Left cardiac atrium (tissue), 4 donors: ENCODE measurements at regions of chr1 and their contacts with region 1.

Region 1: GRCh38 chr1:181142096-181142958 is 53.8 kb downstream of the IER5 start:
- DNase-seq: peak; percentile 87
- ATAC-seq: peak; percentile 95 to 99

Region 2: GRCh38 chr1:180527101-180527669 is 615.1 kb before region 1 on chr1:
- intact Hi-C with region 1: loop called in 1 of 2 experiments (anchors 10 kb)
- DNase-seq: no peak
- ATAC-seq: peak in 1 of 2 donors; percentile 40

Region 3: DNA sequence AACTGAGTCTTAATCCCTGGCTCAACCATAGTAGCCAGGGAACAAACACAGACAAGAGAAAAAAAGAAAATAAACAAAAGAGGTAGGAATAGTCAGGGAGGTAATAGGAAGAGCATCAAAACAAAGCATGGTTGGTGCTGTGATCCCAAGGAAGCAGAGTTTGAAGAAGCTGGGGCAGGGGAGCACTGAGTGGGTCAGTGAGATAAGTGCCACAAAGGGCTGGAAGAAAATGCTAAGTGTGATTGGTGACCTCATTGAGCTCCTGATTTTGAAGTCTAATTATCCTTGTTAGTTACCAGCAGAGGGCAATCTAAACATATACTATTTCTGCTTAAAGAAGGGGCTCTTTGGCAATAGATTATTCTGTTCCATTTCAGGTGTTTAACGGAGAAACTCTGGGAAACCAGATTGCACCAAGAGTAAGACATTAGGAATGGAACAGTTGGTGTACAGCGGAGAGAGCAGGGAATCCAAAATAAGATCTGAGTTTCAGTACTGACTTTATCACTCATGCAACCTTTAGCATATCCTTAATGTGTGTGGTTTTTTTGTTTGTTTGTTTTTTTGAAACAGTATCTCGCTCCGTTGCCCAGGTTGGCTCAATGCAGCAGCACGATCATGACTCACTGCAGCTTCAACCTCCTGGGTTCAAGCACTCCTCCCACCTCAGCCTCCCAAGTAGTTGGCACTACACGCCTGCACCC is 260.4 kb before region 1 on chr1:
- intact Hi-C with region 1: loop called in 1 of 2 experiments (anchors 5 kb)
- DNase-seq: no peak
- ATAC-seq: peak; percentile 72 to 82

Region 4: DNA sequence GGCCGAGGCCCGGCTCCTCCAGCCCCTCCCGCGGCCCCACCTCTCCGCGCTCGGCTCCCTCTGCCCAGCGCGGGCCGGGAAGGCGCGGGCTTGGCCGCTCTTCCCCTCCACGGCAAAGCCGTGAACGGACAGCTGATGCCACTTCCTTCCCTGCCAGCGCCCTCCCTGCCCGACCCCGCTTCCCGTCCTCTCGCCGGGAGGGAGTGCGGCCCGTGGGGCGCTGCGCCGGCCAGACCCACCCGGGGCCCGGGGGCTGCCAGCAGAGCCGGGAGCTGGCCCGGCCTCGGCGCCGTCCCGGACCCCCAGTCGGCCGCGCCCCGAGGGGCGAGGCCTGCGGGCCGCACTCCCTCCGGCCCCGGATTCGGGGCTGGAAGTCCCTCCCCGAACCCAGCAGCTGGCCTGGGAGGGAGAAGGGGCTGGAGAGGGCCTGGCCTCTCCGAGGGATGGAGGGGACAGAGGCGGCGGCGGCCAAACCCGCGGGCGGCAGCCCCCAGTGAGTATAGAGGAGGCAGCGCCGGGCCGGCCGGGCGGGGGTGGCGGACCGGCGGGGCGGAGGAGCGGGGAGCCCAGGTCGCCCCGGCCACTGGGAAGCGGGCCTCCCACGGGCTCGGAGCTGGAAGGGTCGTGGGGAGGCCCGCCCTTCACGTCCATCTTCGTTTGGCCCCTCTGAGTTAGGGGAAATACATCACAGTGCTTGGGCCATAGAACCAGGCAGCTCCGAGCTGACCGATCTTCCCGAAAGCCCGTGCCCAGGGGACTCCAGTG is 229.3 kb before region 1 on chr1 and contains the start of gene KIAA1614:
- intact Hi-C with region 1: no loop called
- DNase-seq: peak; percentile 59
- ATAC-seq: peak; percentile 88 to 90
- total RNA-seq, gene KIAA1614: 8.2 to 9.3 TPM

Region 5: GRCh38 chr1:181021811-181022434 is 120.4 kb before region 1 on chr1:
- intact Hi-C with region 1: loop called in 1 of 2 experiments (anchors 5 kb)
- DNase-seq: peak; percentile 73
- ATAC-seq: peak; percentile 62 to 79

Region 6: DNA sequence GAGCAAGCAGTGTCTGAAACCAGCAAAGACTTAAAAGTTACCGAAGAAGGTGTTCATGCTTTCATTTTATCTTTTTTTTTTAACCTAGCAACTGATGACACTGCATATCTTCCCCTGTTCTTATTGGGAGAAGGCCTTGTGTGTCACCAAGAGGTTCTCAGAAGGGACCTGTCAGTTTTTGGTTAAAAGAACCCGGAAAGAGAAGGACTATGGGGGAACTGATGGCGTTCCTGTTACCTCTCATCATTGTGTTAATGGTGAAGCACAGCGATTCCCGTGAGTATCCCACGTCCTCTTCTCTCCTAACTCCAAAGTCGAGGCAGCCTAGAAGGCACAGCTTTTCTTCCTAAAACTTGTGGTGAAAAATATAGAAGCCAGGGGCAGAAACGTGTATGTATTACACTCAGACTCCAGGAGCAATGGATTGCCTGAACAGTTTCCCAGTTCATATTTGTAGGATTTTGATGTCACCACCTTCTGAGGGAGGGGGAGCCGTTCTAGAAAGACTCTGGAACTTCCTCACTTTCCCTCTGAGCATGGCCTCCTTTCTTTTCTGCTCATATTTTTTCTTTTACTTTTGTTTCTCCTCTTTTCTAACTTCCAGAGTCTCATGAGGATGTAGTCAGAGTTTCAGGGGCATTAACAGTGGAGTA is 108.4 kb before region 1 on chr1 and contains the start of gene MR1:
- intact Hi-C with region 1: loop called (anchors 1 to 10 kb)
- DNase-seq: no peak
- ATAC-seq: peak; percentile 95
- total RNA-seq, gene MR1: 10.5 to 12.0 TPM

Region 7: DNA sequence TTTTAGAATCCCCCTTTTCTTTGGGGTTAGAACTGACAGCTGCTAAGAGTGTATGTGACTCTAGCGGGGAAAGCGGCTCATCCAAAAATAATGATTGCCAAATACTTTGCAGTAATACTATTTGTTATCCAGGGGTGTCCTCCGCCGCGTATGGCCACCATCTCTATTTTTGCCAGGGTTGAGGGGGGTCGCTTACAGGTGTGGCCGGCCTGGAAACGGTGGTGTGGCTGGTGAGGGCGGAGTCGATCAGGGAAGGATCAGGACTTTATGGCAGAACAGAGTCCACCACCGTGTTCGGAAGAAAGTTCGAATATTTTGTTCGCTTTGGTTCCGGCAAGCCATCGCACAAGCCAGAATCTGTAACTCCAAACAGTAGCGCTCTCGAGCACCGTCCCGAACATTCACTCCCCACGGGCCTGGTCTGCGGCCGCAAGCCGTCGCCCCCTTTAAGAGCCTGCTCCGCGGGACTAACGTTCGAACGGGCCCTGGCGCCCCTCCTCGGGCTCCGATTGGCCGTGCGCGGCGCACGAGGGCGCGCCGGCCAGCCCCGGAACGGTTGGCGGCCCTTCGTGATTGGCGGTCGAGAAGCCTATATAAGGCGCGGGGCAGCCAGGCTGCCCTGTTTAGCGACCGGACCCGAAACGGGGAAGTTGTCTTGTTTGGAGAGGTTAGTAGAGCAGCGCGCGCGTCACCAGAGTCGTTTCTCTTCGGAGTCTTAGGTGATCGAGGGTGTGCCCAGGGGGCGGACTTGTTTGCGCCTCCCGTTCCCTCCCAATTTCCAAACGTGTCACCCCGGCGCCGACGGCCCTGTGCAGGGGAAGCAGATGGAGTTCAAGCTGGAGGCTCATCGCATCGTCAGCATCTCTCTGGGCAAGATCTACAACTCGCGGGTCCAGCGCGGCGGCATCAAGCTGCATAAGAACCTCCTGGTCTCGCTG is 54.0 kb before region 1 on chr1 and contains the start of gene IER5:
- intact Hi-C with region 1: loop called (anchors 1 to 10 kb)
- DNase-seq: peak; percentile 95
- ATAC-seq: peak; percentile 91 to 96
- total RNA-seq, gene IER5: 15.7 to 25.0 TPM

Region 8: GRCh38 chr1:181105134-181106021 is 36.9 kb before region 1 on chr1:
- intact Hi-C with region 1: loop called in 1 of 2 experiments (anchors 5 kb)
- DNase-seq: peak; percentile 97
- ATAC-seq: peak; percentile 96 to 97

Region 9: GRCh38 chr1:181222972-181223505 is 80.7 kb after region 1 on chr1:
- intact Hi-C with region 1: no loop called
- DNase-seq: no peak
- ATAC-seq: peak in 1 of 2 donors; percentile 55